Posterior vena cava (tissue), 2 donors: ENCODE measurements at regions of chr19 and their contacts with region 1.

Region 1: DNA sequence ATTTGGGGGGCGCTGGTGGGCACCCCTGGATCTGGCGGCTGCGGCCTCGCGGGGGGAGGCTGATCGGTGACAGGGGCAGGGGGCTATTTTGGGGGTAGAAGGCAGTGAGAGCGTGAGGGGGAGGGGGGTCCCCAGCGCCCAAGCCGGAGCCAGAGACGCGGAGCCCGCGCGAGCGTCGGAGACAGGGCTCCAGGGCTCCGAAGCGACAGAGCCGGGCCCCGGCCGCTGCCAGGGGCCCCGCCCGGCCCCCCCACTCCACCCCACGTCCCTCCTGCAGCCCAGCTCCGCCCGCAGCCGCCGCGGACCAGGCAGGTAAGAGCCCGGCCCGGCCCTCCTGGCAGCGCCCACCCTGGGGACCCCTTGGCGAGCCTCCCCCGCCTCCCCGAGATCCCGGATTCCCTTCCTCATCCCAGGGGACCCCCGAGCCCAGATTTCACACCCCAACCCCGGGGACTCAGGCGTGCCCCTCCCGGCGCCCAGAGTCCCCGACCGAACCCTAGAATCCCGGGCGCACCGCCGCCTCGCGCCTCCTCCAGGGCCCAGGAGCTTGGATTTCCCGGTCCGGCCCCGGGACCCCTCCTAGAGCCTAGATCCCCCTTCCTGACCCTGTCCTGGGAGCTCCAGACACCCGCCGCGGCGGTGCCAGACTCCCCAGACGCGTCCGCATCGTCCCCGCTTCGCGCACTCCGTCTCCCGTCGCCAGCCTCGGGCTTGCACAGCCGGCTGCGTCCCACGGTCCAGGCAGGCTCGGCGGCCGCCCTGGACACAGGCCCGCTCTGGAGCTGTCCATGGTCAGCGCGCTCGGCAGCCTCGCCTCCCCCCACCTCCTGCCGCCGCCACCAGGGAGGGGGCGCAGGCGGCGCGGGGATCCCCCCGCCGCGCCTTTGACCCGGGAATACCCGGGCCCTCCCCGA is at the start of gene PPFIA3:
- DNase-seq: peak; percentile 88
- total RNA-seq, gene PPFIA3: 3.6 to 4.9 TPM

Region 2: GRCh38 chr19:49141352-49141751 is 21.7 kb after region 1 on chr19:
- intact Hi-C with region 1: loop called in 1 of 2 experiments (anchors 1 kb)
- DNase-seq: no peak

Region 3: GRCh38 chr19:51002542-51003171 is 1883.0 kb after region 1 on chr19:
- intact Hi-C with region 1: no loop called
- DNase-seq: peak; percentile 70